ENCODE measurements at regions of chr11 and their contacts with region 1.

Region 1: DNA sequence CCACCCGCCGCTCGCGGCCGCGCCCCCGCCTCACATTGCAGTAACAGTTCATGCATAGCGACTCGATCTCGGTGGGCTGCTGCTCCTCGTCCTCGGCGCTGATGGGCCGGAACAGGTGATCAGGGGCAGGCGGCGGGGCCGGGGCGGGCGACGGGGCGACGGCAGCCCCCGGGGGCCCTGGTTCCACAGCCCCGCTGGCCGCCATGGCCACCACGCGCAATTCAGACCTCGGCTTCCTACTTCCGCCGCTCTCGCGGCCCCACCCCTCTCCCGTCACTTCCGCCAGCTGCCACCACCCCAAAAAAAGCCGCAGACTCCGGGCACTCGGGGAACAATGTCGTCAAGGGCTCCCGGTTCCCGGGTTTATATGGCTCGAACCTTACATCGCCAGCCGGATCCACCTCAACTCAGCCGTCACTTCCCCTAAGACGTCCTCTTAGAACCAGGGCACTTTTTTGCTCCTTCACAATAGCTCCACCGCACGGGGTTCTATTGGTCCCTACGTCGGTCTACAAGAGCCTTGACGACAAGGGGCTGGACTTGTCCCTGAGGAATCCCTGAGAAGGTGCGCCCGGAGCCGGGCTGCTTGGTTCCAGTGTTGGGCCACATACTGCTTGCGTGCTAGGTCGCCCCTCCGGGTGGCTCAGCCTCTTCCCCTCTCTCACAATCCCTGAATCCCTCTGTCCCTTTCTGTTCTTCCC is at the start of gene ZPR1:
- DNase-seq: peak; percentile 89
- ATAC-seq: peak; percentile 84
- H3K4me3 Mint-ChIP-seq: peak within 1 kb of the TSS; percentile 94
- H3K27ac Mint-ChIP-seq: peak within 1 kb of the TSS; percentile 92
- H3K4me1 Mint-ChIP-seq: peaks cover 49% of the 10 kb centered on the region
- H3K27me3 Mint-ChIP-seq: peaks cover 6% of the 10 kb centered on the region
- total RNA-seq, gene ZPR1: 60.5 to 62.0 TPM

Region 2: DNA sequence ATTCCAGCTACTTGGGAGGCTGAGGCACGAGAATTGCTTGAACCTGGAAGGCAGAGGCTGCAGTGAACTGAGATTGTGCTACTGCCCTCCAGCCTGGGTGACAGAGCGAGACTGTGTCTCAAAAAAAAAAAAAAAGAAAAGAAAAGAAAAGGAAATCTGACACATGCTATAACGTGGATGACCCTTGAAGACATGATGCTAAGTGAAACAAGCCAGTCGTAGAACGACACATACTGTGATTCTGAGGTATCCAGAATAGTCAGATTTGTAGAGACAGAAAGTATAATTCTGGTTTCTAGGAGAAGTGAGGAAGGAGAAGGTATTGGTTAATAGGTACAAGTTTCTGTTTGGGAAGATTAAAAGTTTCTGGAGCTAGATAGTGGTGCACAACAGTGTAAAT is 10.4 kb after region 1 on chr11:
- CTCF ChIA-PET with region 1: interaction called, 14 read pairs
- POLR2A ChIA-PET with region 1: no interaction called
- DNase-seq: no peak
- ATAC-seq: no peak
- H3K4me3 Mint-ChIP-seq: no peak overlapping the region
- H3K27ac Mint-ChIP-seq: no peak overlapping the region
- H3K4me1 Mint-ChIP-seq: no peaks in the 10 kb centered on the region
- H3K27me3 Mint-ChIP-seq: peaks cover 21% of the 10 kb centered on the region

Region 3: GRCh38 chr11:116853461-116854073 is 65.6 kb after region 1 on chr11:
- CTCF ChIA-PET with region 1: interaction called, 64 read pairs
- POLR2A ChIA-PET with region 1: interaction called, 14 read pairs
- DNase-seq: peak; percentile 83
- ATAC-seq: peak; percentile 95
- H3K4me3 Mint-ChIP-seq: peak overlapping the region; percentile 35
- H3K27ac Mint-ChIP-seq: peak overlapping the region; percentile 93
- H3K4me1 Mint-ChIP-seq: peaks cover 65% of the 10 kb centered on the region
- H3K27me3 Mint-ChIP-seq: no peaks in the 10 kb centered on the region

Region 4: DNA sequence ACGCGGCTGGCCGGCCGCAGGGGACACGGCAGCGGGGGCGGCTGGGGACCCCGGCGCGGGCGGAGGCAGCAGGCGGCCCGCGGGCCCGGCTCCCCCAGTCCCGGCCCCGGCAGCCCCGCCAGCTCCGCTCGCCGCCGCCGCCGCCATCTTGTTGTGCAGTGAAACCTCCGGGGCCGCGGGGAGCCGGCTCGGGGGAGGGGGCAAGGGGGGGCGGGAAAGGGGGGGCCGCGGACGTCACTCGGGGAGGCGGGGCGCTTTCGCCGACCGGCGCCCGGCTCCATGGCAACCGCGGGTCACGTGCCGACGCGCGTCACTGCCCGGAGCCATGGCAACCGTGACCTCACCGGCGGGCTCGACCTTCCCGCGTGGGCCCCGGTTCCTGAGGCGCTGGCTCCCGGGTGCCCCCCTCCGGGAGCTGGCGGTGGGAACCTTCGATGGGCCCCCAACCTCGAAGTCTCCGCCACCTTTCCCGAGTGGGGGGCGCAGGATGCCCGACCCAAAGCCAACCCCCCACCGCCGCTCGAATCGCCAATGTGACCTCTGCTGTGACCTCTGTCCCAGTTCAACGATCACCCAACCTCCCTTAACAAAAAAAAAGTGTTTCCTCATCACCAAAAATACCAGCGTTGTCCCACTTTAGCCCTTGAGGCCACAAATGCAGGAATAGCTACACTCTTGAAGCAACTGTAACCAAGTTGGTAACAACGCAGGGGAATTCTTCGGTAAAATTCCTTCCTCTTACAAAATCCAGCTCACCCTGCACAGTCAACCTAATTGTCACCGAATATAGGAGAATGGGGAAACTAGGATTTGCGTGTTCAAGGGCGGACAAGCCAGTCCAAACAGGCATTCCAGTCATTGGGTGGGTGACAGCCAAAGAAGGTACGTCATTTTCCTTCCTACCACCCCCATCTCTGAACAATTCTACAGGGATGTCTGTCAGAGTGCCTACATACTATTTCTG is 310.6 kb after region 1 on chr11 and contains the start of gene SIK3:
- CTCF ChIA-PET with region 1: interaction called, 16 read pairs
- POLR2A ChIA-PET with region 1: no interaction called
- DNase-seq: peak; percentile 93
- ATAC-seq: peak; percentile 73
- H3K4me3 Mint-ChIP-seq: peak within 1 kb of the TSS; percentile 93
- H3K27ac Mint-ChIP-seq: peak within 1 kb of the TSS; percentile 93
- H3K4me1 Mint-ChIP-seq: peaks cover 44% of the 10 kb centered on the region
- H3K27me3 Mint-ChIP-seq: no peaks in the 10 kb centered on the region
- total RNA-seq, gene SIK3: 25.9 to 31.4 TPM

Region 5: GRCh38 chr11:117143871-117144476 is 356.0 kb after region 1 on chr11 and contains the start of gene PAFAH1B2:
- CTCF ChIA-PET with region 1: interaction called, 16 read pairs
- POLR2A ChIA-PET with region 1: interaction called, 5 read pairs
- DNase-seq: peak; percentile 97
- ATAC-seq: peak; percentile 95
- H3K4me3 Mint-ChIP-seq: peak within 1 kb of the TSS; percentile 92
- H3K27ac Mint-ChIP-seq: peak within 1 kb of the TSS; percentile 92
- H3K4me1 Mint-ChIP-seq: peaks cover 42% of the 10 kb centered on the region
- H3K27me3 Mint-ChIP-seq: peaks cover 21% of the 10 kb centered on the region
- total RNA-seq, gene PAFAH1B2: 56.5 to 60.0 TPM